ENCODE measurements at regions of chr19 and their contacts with region 1.

Region 1: GRCh38 chr19:7943444-7944176 is at the start of gene TIMM44:
- DNase-seq: peak; percentile 93 to 99 (median 98)
- ATAC-seq: peak; percentile 96
- H3K4me3 Mint-ChIP-seq: peak within 1 kb of the TSS; percentile 88 to 98 (median 95)
- H3K27ac Mint-ChIP-seq: peak within 1 kb of the TSS; percentile 90 to 98 (median 96)
- H3K4me1 Mint-ChIP-seq: peaks cover 18 to 43% (median 32%) of the 10 kb centered on the region in 4 donors
- H3K27me3 Mint-ChIP-seq: no peaks in the 10 kb centered on the region
- polyA plus RNA-seq, gene TIMM44: 9.9 to 19.7 (median 15.3) TPM

Region 2: GRCh38 chr19:7928736-7929701 is 14.6 kb before region 1 on chr19:
- POLR2A ChIA-PET with region 1: interaction called, 21 read pairs
- DNase-seq: peak; percentile 55 to 87 (median 78)
- ATAC-seq: peak; percentile 48 to 73
- H3K4me3 Mint-ChIP-seq: peak overlapping the region in 4 of 10 donors; percentile 2 to 56 (median 13)
- H3K27ac Mint-ChIP-seq: peak overlapping the region in 7 of 10 donors; percentile 62 to 88 (median 79)
- H3K4me1 Mint-ChIP-seq: peaks cover 11 to 25% (median 14%) of the 10 kb centered on the region in 4 donors
- H3K27me3 Mint-ChIP-seq: peaks cover 0 to 1% (median 0%) of the 10 kb centered on the region in 5 donors

Region 3: GRCh38 chr19:7986321-7987083 is 42.9 kb after region 1 on chr19:
- POLR2A ChIA-PET with region 1: no interaction called
- DNase-seq: no peak
- ATAC-seq: no peak
- H3K4me3 Mint-ChIP-seq: no peak overlapping the region
- H3K27ac Mint-ChIP-seq: peak overlapping the region in 1 of 10 donors; percentile 88
- H3K4me1 Mint-ChIP-seq: peaks cover 7 to 21% (median 13%) of the 10 kb centered on the region in 4 donors
- H3K27me3 Mint-ChIP-seq: no peaks in the 10 kb centered on the region

Region 4: DNA sequence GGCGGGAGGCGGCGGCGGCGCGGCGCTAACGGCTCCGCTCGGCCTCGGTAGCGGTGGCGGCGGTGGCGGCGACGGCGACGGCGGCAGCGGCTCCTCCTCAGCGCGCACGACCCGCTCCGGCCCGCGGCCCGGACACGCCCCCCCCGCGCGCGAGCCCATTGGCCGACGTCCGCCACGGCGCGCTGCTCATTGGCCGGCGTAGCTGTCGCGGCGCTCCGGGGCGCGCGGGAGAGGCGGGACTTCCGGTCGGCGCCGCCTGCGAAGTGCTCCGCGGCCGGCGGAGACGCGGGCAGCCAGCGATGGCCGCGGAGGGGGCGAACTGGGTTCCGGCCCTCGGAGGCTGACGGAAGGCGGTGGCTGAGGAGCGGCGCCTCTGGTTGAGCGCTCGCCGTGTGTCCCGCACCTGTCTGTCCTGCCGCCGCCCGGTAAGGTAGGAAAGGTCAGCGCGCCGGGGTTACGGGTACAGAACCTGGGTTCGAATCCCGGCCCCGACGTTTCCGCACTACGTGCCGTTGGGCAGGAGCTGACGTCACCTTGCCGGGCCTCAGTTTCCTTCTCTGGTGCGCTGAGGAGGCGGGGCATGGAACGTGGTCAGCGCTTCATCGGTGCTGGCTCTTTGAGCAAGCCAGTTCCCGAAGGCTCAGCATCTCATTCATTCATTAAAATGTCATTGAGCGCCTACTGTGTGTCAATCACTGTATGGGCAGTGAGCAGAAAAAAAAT is 62.1 kb after region 1 on chr19 and contains the start of gene ELAVL1:
- POLR2A ChIA-PET with region 1: interaction called, 12 read pairs
- DNase-seq: peak; percentile 80 to 96 (median 88)
- ATAC-seq: peak; percentile 92 to 95
- H3K4me3 Mint-ChIP-seq: peak within 1 kb of the TSS; percentile 80 to 96 (median 92)
- H3K27ac Mint-ChIP-seq: peak within 1 kb of the TSS; percentile 37 to 95 (median 91)
- H3K4me1 Mint-ChIP-seq: peaks cover 26 to 48% (median 38%) of the 10 kb centered on the region in 4 donors
- H3K27me3 Mint-ChIP-seq: no peaks in the 10 kb centered on the region
- polyA plus RNA-seq, gene ELAVL1: 41.5 to 55.5 (median 45.5) TPM